Activated CD4-positive, alpha-beta T cell treated with anti-CD3 and anti-CD28 coated beads, Interleukin-2, amount 10 ng/mL, durations not matched to agents 24 days and 14 days (primary cell): ENCODE measurements at regions of chr19 and their contacts with region 1.

Region 1: DNA sequence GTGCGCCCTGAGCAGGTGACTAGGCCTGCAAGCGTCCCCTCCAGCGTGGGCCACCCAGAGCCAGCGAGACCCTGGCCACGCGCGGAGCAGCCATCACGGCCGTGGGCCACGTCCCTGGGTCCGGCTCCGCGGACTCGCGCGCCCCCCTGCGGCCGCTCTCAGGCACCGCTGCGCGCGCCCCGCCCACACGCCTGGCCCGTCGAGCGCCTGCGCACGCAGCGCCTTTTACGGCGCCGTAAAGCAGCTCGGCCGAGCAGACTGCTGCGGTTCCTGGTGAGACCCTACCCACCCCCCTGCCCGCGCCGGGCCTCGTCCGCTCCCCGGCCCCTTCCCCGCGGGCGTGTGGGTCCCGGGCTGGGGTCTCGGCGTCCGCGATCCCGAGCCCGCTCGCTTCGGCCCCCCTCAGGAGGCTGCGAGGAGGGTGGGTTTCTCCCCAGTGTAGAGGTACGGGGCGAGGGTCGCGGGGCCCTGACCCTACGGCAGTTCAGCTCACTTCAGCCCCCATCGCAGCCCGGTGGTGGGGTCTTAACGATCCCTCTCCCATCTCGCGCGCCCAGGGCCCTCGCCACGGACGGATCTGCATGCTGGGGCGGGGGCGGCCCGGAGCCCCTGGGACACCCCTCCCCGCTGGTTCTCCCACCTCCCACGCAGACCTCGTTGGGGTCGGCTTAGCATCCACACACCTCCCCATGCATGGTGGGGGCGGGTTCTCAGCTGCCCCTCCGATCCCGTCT is at the start of gene TRAPPC5:
- DNase-seq: peak; percentile 98
- H3K4me3 Mint-ChIP-seq: peak within 1 kb of the TSS; percentile 97
- H3K27ac Mint-ChIP-seq: peak within 1 kb of the TSS; percentile 96
- H3K4me1 Mint-ChIP-seq: peaks cover 43% of the 10 kb centered on the region
- H3K27me3 Mint-ChIP-seq: peaks cover 18% of the 10 kb centered on the region
- total RNA-seq, gene TRAPPC5: 82.9 and 84.1 TPM in 2 replicates

Region 2: GRCh38 chr19:6767357-6768235 is 913.2 kb before region 1 on chr19 and contains the start of gene SH2D3A:
- intact Hi-C with region 1: no loop called
- DNase-seq: peak; percentile 98
- H3K4me3 Mint-ChIP-seq: peak within 1 kb of the TSS; percentile 88
- H3K27ac Mint-ChIP-seq: peak within 1 kb of the TSS; percentile 92
- H3K4me1 Mint-ChIP-seq: peaks cover 46% of the 10 kb centered on the region
- H3K27me3 Mint-ChIP-seq: no peaks in the 10 kb centered on the region
- total RNA-seq, gene SH2D3A: 9.8 and 11.0 TPM in 2 replicates

Region 3: GRCh38 chr19:7629347-7630054 is 51.3 kb before region 1 on chr19 and contains the starts of genes PET100 and XAB2:
- intact Hi-C with region 1: loop called (anchors 2 kb)
- DNase-seq: peak; percentile 98
- H3K4me3 Mint-ChIP-seq: peak within 1 kb of the TSS; percentile 94
- H3K27ac Mint-ChIP-seq: peak within 1 kb of the TSS; percentile 98
- H3K4me1 Mint-ChIP-seq: peaks cover 33% of the 10 kb centered on the region
- H3K27me3 Mint-ChIP-seq: no peaks in the 10 kb centered on the region
- total RNA-seq, gene PET100: 99.2 and 110 TPM in 2 replicates
- total RNA-seq, gene XAB2: 51.0 and 51.6 TPM in 2 replicates

Region 4: GRCh38 chr19:7705387-7706187 is 24.8 kb after region 1 on chr19:
- intact Hi-C with region 1: loop called (anchors 2 kb)
- DNase-seq: peak; percentile 89
- H3K4me3 Mint-ChIP-seq: peak overlapping the region; percentile 77
- H3K27ac Mint-ChIP-seq: peak overlapping the region; percentile 85
- H3K4me1 Mint-ChIP-seq: peaks cover 20% of the 10 kb centered on the region
- H3K27me3 Mint-ChIP-seq: peaks cover 16% of the 10 kb centered on the region

Region 5: GRCh38 chr19:7799640-7800355 is 119.0 kb after region 1 on chr19:
- intact Hi-C with region 1: loop called (anchors 1 kb)
- DNase-seq: peak; percentile 90
- H3K4me3 Mint-ChIP-seq: no peak overlapping the region
- H3K27ac Mint-ChIP-seq: no peak overlapping the region
- H3K4me1 Mint-ChIP-seq: peaks cover 4% of the 10 kb centered on the region
- H3K27me3 Mint-ChIP-seq: peaks cover 51% of the 10 kb centered on the region